ENCODE measurements at regions of chr4 and their contacts with region 1.

Region 1: DNA sequence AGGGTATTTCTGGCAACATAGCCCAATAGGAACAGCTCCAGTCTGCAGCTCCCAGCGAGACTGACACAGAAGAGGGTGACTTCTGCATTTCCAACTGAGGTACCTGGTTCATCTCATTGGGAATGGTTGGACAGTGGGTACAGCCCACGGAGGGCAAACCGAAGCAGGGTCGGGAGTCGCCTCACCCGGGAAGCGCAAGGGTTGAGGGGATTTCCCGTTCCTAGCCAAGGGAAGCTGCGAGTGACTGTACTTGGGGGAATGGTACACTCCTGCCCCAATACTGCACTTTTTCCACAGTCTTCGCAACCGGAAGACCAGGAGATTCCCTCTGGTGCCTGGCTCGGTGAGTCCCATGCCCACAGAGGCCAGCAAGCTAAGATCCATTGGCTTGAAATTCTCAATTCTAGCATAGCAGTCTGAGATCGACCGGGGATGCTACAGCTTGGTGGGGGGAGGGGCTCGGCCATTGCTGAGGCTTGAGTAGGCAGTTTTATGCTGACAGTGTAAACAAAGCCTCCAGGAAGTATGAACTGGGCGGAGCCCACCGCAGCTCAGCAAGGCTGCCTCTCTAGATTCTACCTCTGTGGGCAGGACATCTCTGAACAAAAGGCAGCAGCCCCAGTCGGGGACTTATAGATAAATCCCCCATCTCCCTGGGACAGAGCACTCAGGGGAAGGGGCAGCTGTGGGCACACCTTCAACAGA is 14.0 kb upstream of the ADAD1 start:
- DNase-seq: peak in 2 of 5 donors; percentile 17 to 42
- ATAC-seq: no peak
- H3K4me3 ChIP-seq: no peak overlapping the region
- H3K27ac ChIP-seq: no peak overlapping the region
- H3K4me1 ChIP-seq: no peaks in the 10 kb centered on the region
- H3K27me3 ChIP-seq: no peaks in the 10 kb centered on the region
- CTCF ChIP-seq: no peak
- POLR2A ChIP-seq: no peak

Region 2: DNA sequence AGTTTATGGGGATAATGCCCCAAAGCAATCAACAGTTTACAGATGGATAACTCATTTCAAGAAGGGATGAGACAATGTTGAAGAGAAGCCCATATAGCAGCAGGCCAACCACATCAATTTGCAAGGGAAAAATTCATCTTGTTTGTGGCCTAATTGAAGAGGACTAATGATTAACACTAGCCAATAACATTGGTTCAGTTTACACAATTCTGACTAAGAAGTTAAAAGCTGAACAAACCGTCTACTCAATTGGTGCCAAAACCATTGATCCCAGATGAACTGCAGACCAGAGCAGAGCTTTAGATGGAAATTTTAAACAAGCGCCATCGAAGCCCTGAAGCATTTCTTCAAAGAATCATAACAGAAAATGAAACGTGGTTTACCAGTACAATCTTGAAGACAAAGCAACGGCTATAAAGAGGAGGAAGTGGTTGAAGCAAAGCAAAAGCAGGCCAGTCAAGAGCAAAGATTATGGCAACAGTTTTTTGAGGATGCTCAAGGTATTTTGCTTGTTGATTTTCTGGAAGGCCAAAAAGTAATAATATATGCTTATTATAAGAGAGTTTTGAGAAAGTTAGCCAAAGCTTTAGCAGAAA is 233.2 kb before region 1 on chr4:
- intact Hi-C with region 1: no loop called
- DNase-seq: no peak
- ATAC-seq: no peak
- H3K4me3 ChIP-seq: no peak overlapping the region
- H3K27ac ChIP-seq: no peak overlapping the region
- H3K4me1 ChIP-seq: no peaks in the 10 kb centered on the region
- H3K27me3 ChIP-seq: no peaks in the 10 kb centered on the region
- CTCF ChIP-seq: no peak
- POLR2A ChIP-seq: no peak

Region 3: DNA sequence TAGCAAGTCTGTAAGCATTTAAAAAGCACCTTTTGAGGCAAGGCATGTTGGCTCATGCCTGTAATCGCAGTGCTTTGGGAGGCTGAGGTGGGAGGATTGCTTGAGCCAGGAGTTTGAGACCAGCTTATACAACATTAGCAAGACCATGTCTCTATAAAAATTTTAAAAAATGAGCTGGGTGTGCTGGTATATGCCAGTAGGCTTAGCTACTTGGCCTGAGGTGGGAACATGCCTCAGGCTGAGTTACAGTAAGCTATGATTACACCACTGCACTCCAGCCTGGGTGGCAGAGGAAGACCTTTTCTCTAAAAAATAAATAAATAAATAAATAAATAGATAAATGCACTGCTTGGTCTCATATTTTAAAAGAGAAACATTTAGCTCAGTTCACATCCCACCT is 185.9 kb before region 1 on chr4:
- intact Hi-C with region 1: loop called in 1 of 10 experiments (anchors 10 kb)
- DNase-seq: no peak
- ATAC-seq: no peak
- H3K4me3 ChIP-seq: no peak overlapping the region
- H3K27ac ChIP-seq: no peak overlapping the region
- H3K4me1 ChIP-seq: no peaks in the 10 kb centered on the region
- H3K27me3 ChIP-seq: no peaks in the 10 kb centered on the region
- CTCF ChIP-seq: no peak
- POLR2A ChIP-seq: no peak

Measured in heart left ventricle (tissue), 16 donors.